CD8-positive, alpha-beta memory T cell (primary cell): ENCODE measurements at regions of chr3 and their contacts with region 1.

Region 1: GRCh38 chr3:161274719-161275298 is 53.7 kb downstream of the NMD3 start:
- DNase-seq: peak in 4 of 5 donors; percentile 2 to 51 (median 24)
- H3K4me3 ChIP-seq: no peak overlapping the region
- H3K4me3 Mint-ChIP-seq: no peak overlapping the region
- H3K27ac ChIP-seq: no peak overlapping the region
- H3K27ac Mint-ChIP-seq: no peak overlapping the region
- H3K4me1 ChIP-seq: no peaks in the 10 kb centered on the region
- H3K4me1 Mint-ChIP-seq: peaks cover 0 to 8% (median 2%) of the 10 kb centered on the region in 3 donors
- H3K27me3 ChIP-seq: no peaks in the 10 kb centered on the region
- H3K27me3 Mint-ChIP-seq: peaks cover 0 to 1% of the 10 kb centered on the region in 2 donors

Region 2: DNA sequence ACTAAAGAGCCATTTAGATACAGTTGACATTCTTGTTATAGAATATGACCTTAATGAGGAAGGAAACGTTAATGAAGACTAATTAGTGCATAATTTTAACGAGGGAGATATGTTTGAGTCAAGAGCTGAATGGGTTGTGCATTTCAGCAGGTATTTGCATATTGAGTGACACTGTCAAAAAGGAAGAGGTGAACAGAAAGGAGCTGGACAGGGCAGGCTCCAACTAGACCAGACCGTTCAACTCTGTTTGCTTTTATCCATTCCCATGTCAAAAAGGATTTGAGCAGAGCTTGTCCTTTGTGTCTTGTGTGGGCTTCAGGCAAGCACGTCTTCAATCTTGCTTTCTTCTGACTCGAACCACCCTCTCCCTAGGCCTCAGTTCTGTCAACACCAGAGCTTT is 210.4 kb before region 1 on chr3:
- CTCF ChIA-PET with region 1: no interaction called
- POLR2A ChIA-PET with region 1: no interaction called
- DNase-seq: no peak
- H3K4me3 ChIP-seq: no peak overlapping the region
- H3K4me3 Mint-ChIP-seq: no peak overlapping the region
- H3K27ac ChIP-seq: no peak overlapping the region
- H3K27ac Mint-ChIP-seq: no peak overlapping the region
- H3K4me1 ChIP-seq: no peaks in the 10 kb centered on the region
- H3K4me1 Mint-ChIP-seq: no peaks in the 10 kb centered on the region
- H3K27me3 ChIP-seq: no peaks in the 10 kb centered on the region
- H3K27me3 Mint-ChIP-seq: no peaks in the 10 kb centered on the region

Region 3: DNA sequence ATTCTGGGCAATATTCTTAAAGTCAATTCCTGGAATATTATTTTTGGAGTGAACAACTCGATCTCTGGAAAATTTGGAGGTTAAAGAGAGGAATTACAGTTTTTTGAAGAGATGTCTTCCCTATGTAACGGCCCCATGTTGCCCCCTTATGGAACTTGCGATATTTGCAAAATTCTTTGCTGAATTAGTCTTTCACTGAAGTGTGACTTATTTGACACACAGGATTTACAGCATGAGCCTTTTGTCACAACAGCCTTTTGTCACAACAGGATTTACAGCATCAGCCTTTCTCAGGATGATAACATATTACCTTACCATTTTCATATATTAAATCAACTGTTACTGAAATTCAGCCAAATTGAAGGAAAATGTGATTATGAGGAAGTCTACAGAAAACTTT is 134.3 kb after region 1 on chr3:
- CTCF ChIA-PET with region 1: interaction called, 28 read pairs
- POLR2A ChIA-PET with region 1: no interaction called
- DNase-seq: peak in 2 of 5 donors; percentile 43 to 47
- H3K4me3 ChIP-seq: no peak overlapping the region
- H3K4me3 Mint-ChIP-seq: no peak overlapping the region
- H3K27ac ChIP-seq: no peak overlapping the region
- H3K27ac Mint-ChIP-seq: no peak overlapping the region
- H3K4me1 ChIP-seq: peaks cover 22% of the 10 kb centered on the region
- H3K4me1 Mint-ChIP-seq: peaks cover 27 to 33% (median 32%) of the 10 kb centered on the region in 3 donors
- H3K27me3 ChIP-seq: no peaks in the 10 kb centered on the region
- H3K27me3 Mint-ChIP-seq: peaks cover 7 to 19% of the 10 kb centered on the region in 2 donors

Region 4: GRCh38 chr3:161422204-161422603 is 147.4 kb after region 1 on chr3:
- CTCF ChIA-PET with region 1: interaction called, 11 read pairs
- POLR2A ChIA-PET with region 1: no interaction called
- DNase-seq: no peak
- H3K4me3 ChIP-seq: no peak overlapping the region
- H3K4me3 Mint-ChIP-seq: no peak overlapping the region
- H3K27ac ChIP-seq: no peak overlapping the region
- H3K27ac Mint-ChIP-seq: no peak overlapping the region
- H3K4me1 ChIP-seq: no peaks in the 10 kb centered on the region
- H3K4me1 Mint-ChIP-seq: peaks cover 0 to 7% (median 4%) of the 10 kb centered on the region in 3 donors
- H3K27me3 ChIP-seq: no peaks in the 10 kb centered on the region
- H3K27me3 Mint-ChIP-seq: peaks cover 0 to 4% of the 10 kb centered on the region in 2 donors

Region 5: DNA sequence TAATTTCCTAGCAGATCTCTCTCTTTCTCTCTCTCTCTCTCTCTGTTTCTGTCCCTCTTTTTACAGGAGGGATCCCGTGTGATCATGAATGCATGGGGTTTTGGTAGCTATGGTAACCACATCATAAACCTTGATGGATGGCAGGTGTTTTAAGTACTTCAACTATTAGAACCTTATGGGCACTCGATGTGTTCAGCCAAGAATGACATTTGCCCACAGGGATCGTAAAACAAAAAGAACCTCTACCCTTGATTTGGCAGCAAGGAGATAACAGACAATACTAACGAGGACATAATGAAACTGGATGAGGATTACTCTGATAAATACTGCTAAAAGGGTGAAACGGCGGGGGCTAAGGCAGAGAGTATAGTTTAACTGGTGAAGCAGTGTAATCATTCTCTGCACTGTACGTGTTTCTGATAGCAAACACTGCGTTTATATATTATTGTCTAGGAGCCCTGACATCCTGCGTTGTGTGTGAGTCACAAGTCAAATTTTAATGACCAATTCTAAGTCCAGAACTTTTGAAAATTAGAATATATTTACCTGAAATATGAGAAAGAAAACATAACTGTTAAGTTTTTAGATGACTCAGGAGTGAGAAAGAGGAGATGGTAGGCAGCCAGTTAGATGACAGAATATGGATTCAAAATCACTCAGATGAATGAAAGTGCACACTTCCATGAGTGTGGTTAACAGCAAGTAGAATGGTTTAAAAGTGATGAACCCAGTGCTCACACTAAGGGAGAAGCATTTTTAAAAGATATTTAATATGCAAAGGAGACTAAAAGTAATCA is 302.1 kb after region 1 on chr3:
- CTCF ChIA-PET with region 1: no interaction called
- POLR2A ChIA-PET with region 1: no interaction called
- DNase-seq: no peak
- H3K4me3 ChIP-seq: no peak overlapping the region
- H3K4me3 Mint-ChIP-seq: no peak overlapping the region
- H3K27ac ChIP-seq: no peak overlapping the region
- H3K27ac Mint-ChIP-seq: no peak overlapping the region
- H3K4me1 ChIP-seq: no peaks in the 10 kb centered on the region
- H3K4me1 Mint-ChIP-seq: no peaks in the 10 kb centered on the region
- H3K27me3 ChIP-seq: no peaks in the 10 kb centered on the region
- H3K27me3 Mint-ChIP-seq: no peaks in the 10 kb centered on the region